Panc1 (cell line): ENCODE measurements at regions of chr9 and their contacts with region 1.

Region 1: GRCh38 chr9:138022756-138023393 is 145.3 kb downstream of the CACNA1B start:
- DNase-seq: no peak
- ATAC-seq: peak; percentile 65
- H3K4me3 ChIP-seq: peak overlapping the region; percentile 6 to 31; a peak in 2 of 4 replicates
- H3K27ac ChIP-seq: no peak overlapping the region
- H3K4me1 ChIP-seq: no peaks in the 10 kb centered on the region
- H3K27me3 ChIP-seq: no peaks in the 10 kb centered on the region
- CTCF ChIP-seq: no peak

Region 2: GRCh38 chr9:137856804-137857203 is 166.1 kb before region 1 on chr9:
- CTCF ChIA-PET with region 1: no interaction called
- POLR2A ChIA-PET with region 1: no interaction called
- in situ Hi-C with region 1: no loop called
- intact Hi-C with region 1: no loop called
- DNase-seq: no peak
- ATAC-seq: no peak
- H3K4me3 ChIP-seq: no peak overlapping the region
- H3K27ac ChIP-seq: no peak overlapping the region
- H3K4me1 ChIP-seq: no peaks in the 10 kb centered on the region
- H3K27me3 ChIP-seq: no peaks in the 10 kb centered on the region
- CTCF ChIP-seq: no peak

Region 3: GRCh38 chr9:138040446-138041430 is 17.9 kb after region 1 on chr9:
- CTCF ChIA-PET with region 1: no interaction called
- POLR2A ChIA-PET with region 1: interaction called, 14 read pairs
- in situ Hi-C with region 1: no loop called
- intact Hi-C with region 1: no loop called
- DNase-seq: no peak
- ATAC-seq: no peak
- H3K4me3 ChIP-seq: no peak overlapping the region
- H3K27ac ChIP-seq: no peak overlapping the region
- H3K4me1 ChIP-seq: no peaks in the 10 kb centered on the region
- H3K27me3 ChIP-seq: no peaks in the 10 kb centered on the region
- CTCF ChIP-seq: no peak